Caco-2 (cell line): ENCODE measurements at regions of chr3 and their contacts with region 1.

Region 1: DNA sequence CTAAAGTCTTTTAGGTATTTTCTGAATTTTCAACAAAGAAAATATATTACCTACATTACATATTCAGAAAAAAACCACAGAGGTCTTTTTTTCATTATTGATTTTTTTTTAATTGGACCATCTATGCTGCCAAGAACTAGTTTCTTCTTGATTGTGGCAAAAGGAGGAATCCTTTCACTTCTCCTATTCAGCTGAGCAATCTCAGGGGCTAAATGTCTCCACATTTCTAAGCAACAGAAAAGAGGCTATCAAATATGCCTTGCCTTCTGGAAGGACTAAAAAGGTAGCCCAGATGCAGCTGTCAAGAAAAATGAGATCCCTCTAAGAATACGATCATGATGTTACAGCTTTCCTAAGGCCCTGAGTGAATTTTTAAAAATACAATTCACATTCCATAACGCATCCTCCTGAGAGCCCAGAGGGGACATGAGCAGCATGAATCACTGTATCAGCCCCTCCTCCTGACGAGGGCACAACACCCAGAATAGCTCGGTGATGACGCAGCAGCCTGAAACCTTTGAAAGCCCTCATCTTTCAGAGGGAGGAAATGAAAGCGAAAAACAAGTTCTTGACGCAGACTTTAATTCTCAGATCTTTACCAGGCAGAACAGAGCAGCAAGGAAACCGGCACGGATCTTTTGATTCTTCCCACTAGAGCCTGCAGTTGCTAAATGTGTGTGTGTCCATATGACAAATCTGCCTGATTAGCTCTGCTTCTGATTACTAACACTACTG is 24.6 kb downstream of the RUBCN start:
- DNase-seq: peak; percentile 77 to 84
- H3K4me3 ChIP-seq: peak overlapping the region; percentile 2; the same call in 1 of the 2 replicates
- H3K4me3 Mint-ChIP-seq: peak overlapping the region; percentile 69
- H3K27ac Mint-ChIP-seq: peak overlapping the region; percentile 85
- H3K4me1 ChIP-seq: peaks cover 7% of the 10 kb centered on the region; the same call in 1 of the 2 replicates
- H3K4me1 Mint-ChIP-seq: peaks cover 15% of the 10 kb centered on the region
- H3K27me3 ChIP-seq: no peaks in the 10 kb centered on the region
- H3K27me3 Mint-ChIP-seq: no peaks in the 10 kb centered on the region
- CTCF ChIP-seq: no peak

Region 2: GRCh38 chr3:197692641-197693040 is 19.5 kb before region 1 on chr3:
- CTCF ChIA-PET with region 1: no interaction called
- POLR2A ChIA-PET with region 1: no interaction called
- intact Hi-C with region 1: no loop called
- DNase-seq: no peak
- H3K4me3 ChIP-seq: no peak overlapping the region
- H3K4me3 Mint-ChIP-seq: no peak overlapping the region
- H3K27ac Mint-ChIP-seq: no peak overlapping the region
- H3K4me1 ChIP-seq: no peaks in the 10 kb centered on the region
- H3K4me1 Mint-ChIP-seq: no peaks in the 10 kb centered on the region
- H3K27me3 ChIP-seq: no peaks in the 10 kb centered on the region
- H3K27me3 Mint-ChIP-seq: no peaks in the 10 kb centered on the region
- CTCF ChIP-seq: no peak

Region 3: GRCh38 chr3:197736491-197737318 is 24.6 kb after region 1 on chr3 and contains the start of gene RUBCN:
- CTCF ChIA-PET with region 1: interaction called, 3 read pairs
- POLR2A ChIA-PET with region 1: no interaction called
- intact Hi-C with region 1: loop called (anchors 1 kb)
- DNase-seq: peak; percentile 95 to 96
- H3K4me3 ChIP-seq: peak within 1 kb of the TSS; percentile 94
- H3K4me3 Mint-ChIP-seq: peak within 1 kb of the TSS; percentile 79
- H3K27ac Mint-ChIP-seq: peak within 1 kb of the TSS; percentile 49
- H3K4me1 ChIP-seq: no peaks in the 10 kb centered on the region; the same call in 1 of the 2 replicates
- H3K4me1 Mint-ChIP-seq: peaks cover 6% of the 10 kb centered on the region
- H3K27me3 ChIP-seq: no peaks in the 10 kb centered on the region
- H3K27me3 Mint-ChIP-seq: no peaks in the 10 kb centered on the region
- CTCF ChIP-seq: no peak
- total RNA-seq, gene RUBCN: 10.6 and 14.5 TPM in 2 replicates

Region 4: GRCh38 chr3:197912770-197913476 is 200.8 kb after region 1 on chr3:
- CTCF ChIA-PET with region 1: no interaction called
- POLR2A ChIA-PET with region 1: no interaction called
- intact Hi-C with region 1: no loop called
- DNase-seq: no peak
- H3K4me3 ChIP-seq: no peak overlapping the region
- H3K4me3 Mint-ChIP-seq: no peak overlapping the region
- H3K27ac Mint-ChIP-seq: no peak overlapping the region
- H3K4me1 ChIP-seq: no peaks in the 10 kb centered on the region
- H3K4me1 Mint-ChIP-seq: no peaks in the 10 kb centered on the region
- H3K27me3 ChIP-seq: no peaks in the 10 kb centered on the region
- H3K27me3 Mint-ChIP-seq: peaks cover 3% of the 10 kb centered on the region
- CTCF ChIP-seq: no peak